ENCODE measurements at regions of chr10 and their contacts with region 1.

Region 1: GRCh38 chr10:119207367-119207668 is at the start of gene GRK5:
- DNase-seq: peak; percentile 99
- CTCF ChIP-seq: no peak

Region 2: GRCh38 chr10:119113751-119114732 is 93.3 kb before region 1 on chr10:
- in situ Hi-C with region 1: no loop called
- DNase-seq: no peak
- CTCF ChIP-seq: no peak

Region 3: DNA sequence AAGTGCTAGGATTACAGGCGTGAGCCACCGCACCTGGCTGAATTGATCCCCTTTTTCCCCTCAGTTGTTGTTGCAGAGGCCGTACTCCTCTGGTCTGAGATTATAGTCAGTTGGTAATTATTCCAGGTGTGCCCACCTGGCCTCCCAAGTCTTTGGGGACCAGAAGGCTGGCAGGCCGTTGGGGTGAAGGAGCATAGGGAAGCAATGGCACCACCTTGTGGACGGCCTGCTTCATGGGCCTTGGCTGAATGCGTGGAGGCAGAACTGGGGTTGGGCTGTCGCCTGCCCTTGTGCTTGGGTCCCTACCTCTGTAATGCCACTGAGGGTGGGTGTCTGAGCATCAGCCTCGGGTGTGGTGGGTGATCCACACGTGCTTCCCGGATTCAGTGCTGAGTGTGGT is 209.5 kb after region 1 on chr10:
- in situ Hi-C with region 1: loop called (anchors 5 kb)
- DNase-seq: peak; percentile 92
- CTCF ChIP-seq: peak; percentile 90